Endothelial cell of umbilical vein (primary cell): ENCODE measurements at regions of chr1 and their contacts with region 1.

Region 1: GRCh38 chr1:37978541-37978940 is 11.3 kb downstream of the SF3A3 start:
- DNase-seq: no peak
- H3K4me3 ChIP-seq: no peak overlapping the region
- H3K27ac ChIP-seq: no peak overlapping the region
- H3K4me1 ChIP-seq: no peaks in the 10 kb centered on the region
- H3K27me3 ChIP-seq: no peaks in the 10 kb centered on the region
- CTCF ChIP-seq: no peak
- POLR2A ChIP-seq: no peak

Region 2: DNA sequence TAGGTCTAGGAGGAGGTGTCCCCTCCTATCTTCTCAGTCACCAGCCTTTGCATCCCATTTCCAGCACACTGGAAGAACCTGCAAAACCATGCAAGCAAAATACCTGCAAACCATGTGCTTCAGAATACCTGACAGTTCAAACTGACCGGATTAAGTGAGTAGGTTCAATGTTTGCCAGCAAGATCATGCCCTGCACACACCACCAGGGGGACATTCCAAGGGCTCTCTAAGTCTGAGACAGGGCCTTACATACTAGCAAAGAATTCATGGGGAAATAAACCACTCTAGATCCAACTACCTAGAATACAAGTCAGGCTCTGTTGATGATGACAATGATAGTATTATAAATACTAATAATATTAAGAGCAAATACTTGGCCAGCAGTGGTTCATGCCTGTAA is 59.3 kb before region 1 on chr1:
- CTCF ChIA-PET with region 1: no interaction called
- POLR2A ChIA-PET with region 1: no interaction called
- dilution Hi-C with region 1: no loop called
- intact Hi-C with region 1: loop called (anchors 1 kb)
- DNase-seq: no peak
- H3K4me3 ChIP-seq: no peak overlapping the region
- H3K27ac ChIP-seq: no peak overlapping the region
- H3K4me1 ChIP-seq: no peaks in the 10 kb centered on the region
- H3K27me3 ChIP-seq: no peaks in the 10 kb centered on the region
- CTCF ChIP-seq: peak; percentile 44 to 55
- POLR2A ChIP-seq: no peak